Caco-2 (cell line): ENCODE measurements at regions of chr14 and their contacts with region 1.

Region 1: DNA sequence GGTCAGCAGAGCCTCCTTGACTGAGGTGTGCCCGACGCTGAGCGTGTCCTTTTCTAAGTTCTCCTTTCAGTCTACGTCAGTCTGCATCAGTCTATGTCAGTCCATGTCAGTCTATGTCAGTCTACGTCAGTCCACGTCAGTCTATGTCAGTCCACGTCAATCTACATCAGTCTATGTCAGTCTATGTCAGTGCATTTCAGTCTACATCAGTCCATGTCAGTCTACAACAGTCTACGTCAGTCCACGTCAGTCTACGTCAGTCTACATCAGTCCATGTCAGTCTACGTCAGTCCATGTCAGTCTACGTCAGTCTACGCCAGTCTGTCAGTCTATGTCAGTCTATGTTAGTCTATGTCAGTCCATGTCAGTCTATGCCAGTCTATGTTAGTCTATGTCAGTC is 15.9 kb downstream of the EIF5 start:
- DNase-seq: no peak
- H3K4me3 ChIP-seq: no peak overlapping the region
- H3K4me3 Mint-ChIP-seq: no peak overlapping the region
- H3K27ac Mint-ChIP-seq: no peak overlapping the region
- H3K4me1 ChIP-seq: no peaks in the 10 kb centered on the region
- H3K4me1 Mint-ChIP-seq: no peaks in the 10 kb centered on the region
- H3K27me3 ChIP-seq: no peaks in the 10 kb centered on the region
- H3K27me3 Mint-ChIP-seq: peaks cover 2% of the 10 kb centered on the region
- CTCF ChIP-seq: no peak

Region 2: DNA sequence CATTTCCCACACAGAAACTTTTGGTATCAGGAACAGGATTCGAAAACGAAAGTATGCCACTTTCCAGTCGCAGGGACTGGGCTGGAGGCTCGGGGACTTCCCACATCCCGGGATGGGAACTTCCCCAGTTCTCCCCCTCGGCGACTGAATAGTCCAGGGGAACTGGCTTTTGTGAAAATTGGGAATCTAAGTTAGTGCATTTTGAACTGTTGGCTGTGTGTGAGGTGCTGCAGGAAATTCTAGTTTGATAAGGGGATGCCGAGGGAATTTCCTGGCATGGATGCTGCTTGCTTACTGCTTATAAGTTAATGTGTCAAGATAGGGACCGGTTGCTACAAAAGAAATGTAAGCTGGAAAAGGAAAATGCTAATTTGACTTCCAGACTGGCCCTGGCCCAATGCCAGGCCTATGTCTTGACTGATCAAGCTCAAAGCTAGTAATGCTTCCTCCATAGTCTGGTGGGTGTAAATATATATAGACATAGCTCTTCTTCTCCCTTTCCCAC is 89.3 kb before region 1 on chr14:
- CTCF ChIA-PET with region 1: no interaction called
- POLR2A ChIA-PET with region 1: no interaction called
- intact Hi-C with region 1: no loop called
- DNase-seq: peak in 1 of 2 experiments; percentile 27
- H3K4me3 ChIP-seq: peak overlapping the region; percentile 37
- H3K4me3 Mint-ChIP-seq: peak overlapping the region; percentile 82
- H3K27ac Mint-ChIP-seq: peak overlapping the region; percentile 63
- H3K4me1 ChIP-seq: no peaks in the 10 kb centered on the region
- H3K4me1 Mint-ChIP-seq: peaks cover 6% of the 10 kb centered on the region
- H3K27me3 ChIP-seq: no peaks in the 10 kb centered on the region
- H3K27me3 Mint-ChIP-seq: no peaks in the 10 kb centered on the region
- CTCF ChIP-seq: no peak

Region 3: GRCh38 chr14:103385152-103385993 is 35.4 kb after region 1 on chr14 and contains the start of gene MARK3:
- CTCF ChIA-PET with region 1: interaction called, 6 read pairs
- POLR2A ChIA-PET with region 1: no interaction called
- intact Hi-C with region 1: loop called (anchors 5 kb)
- DNase-seq: peak; percentile 96 to 97
- H3K4me3 ChIP-seq: peak within 1 kb of the TSS; percentile 98
- H3K4me3 Mint-ChIP-seq: peak within 1 kb of the TSS; percentile 90
- H3K27ac Mint-ChIP-seq: peak within 1 kb of the TSS; percentile 86
- H3K4me1 ChIP-seq: peaks cover 9% of the 10 kb centered on the region; the same call in 1 of the 2 replicates
- H3K4me1 Mint-ChIP-seq: peaks cover 6% of the 10 kb centered on the region
- H3K27me3 ChIP-seq: no peaks in the 10 kb centered on the region
- H3K27me3 Mint-ChIP-seq: peaks cover 13% of the 10 kb centered on the region
- CTCF ChIP-seq: peak in 1 of 2 experiments; percentile 7
- total RNA-seq, gene MARK3: 71.6 and 78.0 TPM in 2 replicates